Transverse colon (tissue), 4 donors: ENCODE measurements at regions of chr4 and their contacts with region 1.

Region 1: GRCh38 chr4:41644288-41644914 is 104.1 kb downstream of the PHOX2B start:
- DNase-seq: peak; percentile 75
- H3K4me3 ChIP-seq: peak overlapping the region in 1 of 4 donors; percentile 23
- H3K27ac ChIP-seq: no peak overlapping the region
- H3K4me1 ChIP-seq: peaks cover 0 to 15% (median 8%) of the 10 kb centered on the region in 4 donors
- H3K27me3 ChIP-seq: peaks cover 13% of the 10 kb centered on the region
- CTCF ChIP-seq: peak; percentile 67 to 88 (median 79)
- EP300 ChIP-seq: no peak
- POLR2A ChIP-seq: no peak

Region 2: GRCh38 chr4:40933272-40934053 is 710.9 kb before region 1 on chr4:
- in situ Hi-C with region 1: loop called in 1 of 4 experiments (anchors 25 kb)
- intact Hi-C with region 1: no loop called
- DNase-seq: no peak
- H3K4me3 ChIP-seq: no peak overlapping the region
- H3K27ac ChIP-seq: no peak overlapping the region
- H3K4me1 ChIP-seq: no peaks in the 10 kb centered on the region
- H3K27me3 ChIP-seq: no peaks in the 10 kb centered on the region
- CTCF ChIP-seq: no peak
- EP300 ChIP-seq: no peak
- POLR2A ChIP-seq: no peak

Region 3: GRCh38 chr4:41579526-41579925 is 64.9 kb before region 1 on chr4:
- in situ Hi-C with region 1: no loop called
- intact Hi-C with region 1: no loop called
- DNase-seq: no peak
- H3K4me3 ChIP-seq: no peak overlapping the region
- H3K27ac ChIP-seq: no peak overlapping the region
- H3K4me1 ChIP-seq: no peaks in the 10 kb centered on the region
- H3K27me3 ChIP-seq: no peaks in the 10 kb centered on the region
- CTCF ChIP-seq: no peak
- EP300 ChIP-seq: no peak
- POLR2A ChIP-seq: no peak